CD8-positive, alpha-beta T cell (primary cell): ENCODE measurements at regions of chr11 and their contacts with region 1.

Region 1: GRCh38 chr11:11135820-11136465 is 217.1 kb downstream of the CSNK2A3 start:
- DNase-seq: no peak
- ATAC-seq: no peak
- H3K4me3 ChIP-seq: no peak overlapping the region
- H3K4me3 Mint-ChIP-seq: no peak overlapping the region
- H3K27ac ChIP-seq: no peak overlapping the region
- H3K27ac Mint-ChIP-seq: no peak overlapping the region
- H3K4me1 ChIP-seq: peaks cover 10% of the 10 kb centered on the region
- H3K4me1 Mint-ChIP-seq: peaks cover 13% of the 10 kb centered on the region
- H3K27me3 ChIP-seq: peaks cover 0 to 3% of the 10 kb centered on the region in 2 experiments
- H3K27me3 Mint-ChIP-seq: peaks cover 7% of the 10 kb centered on the region
- CTCF ChIP-seq: no peak

Region 2: GRCh38 chr11:10955616-10956015 is 180.3 kb before region 1 on chr11:
- CTCF ChIA-PET with region 1: no interaction called
- POLR2A ChIA-PET with region 1: no interaction called
- intact Hi-C with region 1: no loop called
- DNase-seq: no peak
- ATAC-seq: no peak
- H3K4me3 ChIP-seq: no peak overlapping the region
- H3K4me3 Mint-ChIP-seq: no peak overlapping the region
- H3K27ac ChIP-seq: no peak overlapping the region
- H3K27ac Mint-ChIP-seq: no peak overlapping the region
- H3K4me1 ChIP-seq: no peaks in the 10 kb centered on the region
- H3K4me1 Mint-ChIP-seq: no peaks in the 10 kb centered on the region
- H3K27me3 ChIP-seq: no peaks in the 10 kb centered on the region
- H3K27me3 Mint-ChIP-seq: peaks cover 38% of the 10 kb centered on the region
- CTCF ChIP-seq: no peak

Region 3: GRCh38 chr11:11148104-11148509 is 12.2 kb after region 1 on chr11:
- CTCF ChIA-PET with region 1: interaction called, 27 read pairs
- POLR2A ChIA-PET with region 1: interaction called, 4 read pairs
- intact Hi-C with region 1: no loop called
- DNase-seq: peak in 4 of 9 experiments; percentile 26 to 52 (median 38)
- ATAC-seq: no peak
- H3K4me3 ChIP-seq: no peak overlapping the region
- H3K4me3 Mint-ChIP-seq: no peak overlapping the region
- H3K27ac ChIP-seq: no peak overlapping the region
- H3K27ac Mint-ChIP-seq: peak overlapping the region; percentile 79
- H3K4me1 ChIP-seq: peaks cover 42% of the 10 kb centered on the region
- H3K4me1 Mint-ChIP-seq: peaks cover 42% of the 10 kb centered on the region
- H3K27me3 ChIP-seq: no peaks in the 10 kb centered on the region
- H3K27me3 Mint-ChIP-seq: no peaks in the 10 kb centered on the region
- CTCF ChIP-seq: no peak

Region 4: GRCh38 chr11:11169715-11170351 is 33.9 kb after region 1 on chr11:
- CTCF ChIA-PET with region 1: no interaction called
- POLR2A ChIA-PET with region 1: no interaction called
- intact Hi-C with region 1: no loop called
- DNase-seq: no peak
- ATAC-seq: no peak
- H3K4me3 ChIP-seq: no peak overlapping the region
- H3K4me3 Mint-ChIP-seq: no peak overlapping the region
- H3K27ac ChIP-seq: no peak overlapping the region
- H3K27ac Mint-ChIP-seq: no peak overlapping the region
- H3K4me1 ChIP-seq: peaks cover 6% of the 10 kb centered on the region
- H3K4me1 Mint-ChIP-seq: peaks cover 12% of the 10 kb centered on the region
- H3K27me3 ChIP-seq: no peaks in the 10 kb centered on the region
- H3K27me3 Mint-ChIP-seq: no peaks in the 10 kb centered on the region
- CTCF ChIP-seq: no peak